MCF 10A (cell line): ENCODE measurements at regions of chr16 and their contacts with region 1.

Region 1: GRCh38 chr16:87550496-87550961 is 51.8 kb upstream of the JPH3 start:
- DNase-seq: peak; percentile 42
- H3K4me3 Mint-ChIP-seq: no peak overlapping the region
- H3K27ac Mint-ChIP-seq: no peak overlapping the region
- H3K4me1 Mint-ChIP-seq: peaks cover 7% of the 10 kb centered on the region
- H3K27me3 Mint-ChIP-seq: peaks cover 21% of the 10 kb centered on the region
- CTCF ChIP-seq: peak; percentile 98

Region 2: DNA sequence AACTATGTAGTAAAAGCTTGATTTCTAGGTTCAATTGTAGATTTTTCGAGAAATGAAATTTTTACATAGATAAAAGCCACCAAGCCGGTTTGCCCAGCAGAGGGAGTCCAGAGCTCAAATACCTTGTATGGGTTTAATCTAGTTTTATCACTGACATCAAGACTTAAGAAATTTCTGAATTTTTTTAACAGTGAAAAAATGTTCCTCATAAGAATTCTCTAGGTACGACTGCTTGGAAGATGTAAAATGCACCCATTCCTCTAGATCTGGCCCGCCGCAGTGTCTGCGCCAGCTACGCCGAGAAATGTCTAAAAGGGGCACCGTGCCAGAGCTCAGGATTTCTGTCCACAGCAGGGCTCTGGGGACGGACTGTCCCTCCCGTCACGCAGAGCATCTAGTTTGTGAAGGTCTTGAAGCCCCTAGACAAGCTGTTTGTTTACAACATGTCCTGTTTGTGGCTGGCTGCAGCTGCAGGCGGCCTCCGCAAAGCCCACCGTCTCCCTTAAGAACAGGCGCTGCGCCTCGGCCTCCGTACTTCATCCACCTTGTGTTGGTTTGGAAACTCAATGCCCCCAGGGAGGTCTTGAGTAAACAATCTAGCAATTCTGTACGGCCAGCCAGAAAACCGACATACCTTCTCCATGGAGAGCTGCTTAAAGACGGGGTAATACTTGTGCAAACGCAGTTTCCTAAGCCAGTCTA is 133.6 kb before region 1 on chr16:
- CTCF ChIA-PET with region 1: no interaction called
- POLR2A ChIA-PET with region 1: no interaction called
- intact Hi-C with region 1: loop called (anchors 5 kb)
- DNase-seq: peak; percentile 56
- H3K4me3 Mint-ChIP-seq: no peak overlapping the region
- H3K27ac Mint-ChIP-seq: no peak overlapping the region
- H3K4me1 Mint-ChIP-seq: no peaks in the 10 kb centered on the region
- H3K27me3 Mint-ChIP-seq: no peaks in the 10 kb centered on the region
- CTCF ChIP-seq: peak; percentile 52

Region 3: GRCh38 chr16:87581833-87582203 is 31.3 kb after region 1 on chr16:
- CTCF ChIA-PET with region 1: no interaction called
- POLR2A ChIA-PET with region 1: no interaction called
- intact Hi-C with region 1: no loop called
- DNase-seq: peak; percentile 97
- H3K4me3 Mint-ChIP-seq: no peak overlapping the region
- H3K27ac Mint-ChIP-seq: peak overlapping the region; percentile 73
- H3K4me1 Mint-ChIP-seq: peaks cover 6% of the 10 kb centered on the region
- H3K27me3 Mint-ChIP-seq: no peaks in the 10 kb centered on the region
- CTCF ChIP-seq: no peak

Region 4: DNA sequence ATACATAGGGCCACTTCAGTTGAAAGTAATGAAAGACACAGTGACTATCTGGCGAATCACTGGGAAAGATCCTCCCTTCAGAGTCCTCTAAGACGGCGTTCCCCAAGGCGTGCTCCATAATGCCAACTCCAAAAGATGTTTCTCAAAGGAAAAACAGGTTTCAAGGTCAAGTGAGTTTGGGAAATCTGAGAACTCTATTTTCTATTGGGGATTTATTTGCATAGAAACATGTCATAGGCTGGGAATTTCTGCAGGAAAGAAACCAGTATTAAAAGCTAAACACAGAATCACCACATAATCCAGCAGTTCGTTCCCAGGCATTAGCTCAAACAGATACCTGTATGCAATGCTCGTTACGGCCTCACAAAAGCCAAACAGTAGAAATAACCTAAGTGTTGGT is 207.4 kb after region 1 on chr16:
- CTCF ChIA-PET with region 1: no interaction called
- POLR2A ChIA-PET with region 1: no interaction called
- intact Hi-C with region 1: no loop called
- DNase-seq: peak; percentile 53
- H3K4me3 Mint-ChIP-seq: no peak overlapping the region
- H3K27ac Mint-ChIP-seq: no peak overlapping the region
- H3K4me1 Mint-ChIP-seq: peaks cover 12% of the 10 kb centered on the region
- H3K27me3 Mint-ChIP-seq: no peaks in the 10 kb centered on the region
- CTCF ChIP-seq: no peak